Activated naive CD4-positive, alpha-beta T cell treated with anti-CD3 and anti-CD28 coated beads for 36 hours (primary cell): ENCODE measurements at regions of chr6 and their contacts with region 1.

Region 1: DNA sequence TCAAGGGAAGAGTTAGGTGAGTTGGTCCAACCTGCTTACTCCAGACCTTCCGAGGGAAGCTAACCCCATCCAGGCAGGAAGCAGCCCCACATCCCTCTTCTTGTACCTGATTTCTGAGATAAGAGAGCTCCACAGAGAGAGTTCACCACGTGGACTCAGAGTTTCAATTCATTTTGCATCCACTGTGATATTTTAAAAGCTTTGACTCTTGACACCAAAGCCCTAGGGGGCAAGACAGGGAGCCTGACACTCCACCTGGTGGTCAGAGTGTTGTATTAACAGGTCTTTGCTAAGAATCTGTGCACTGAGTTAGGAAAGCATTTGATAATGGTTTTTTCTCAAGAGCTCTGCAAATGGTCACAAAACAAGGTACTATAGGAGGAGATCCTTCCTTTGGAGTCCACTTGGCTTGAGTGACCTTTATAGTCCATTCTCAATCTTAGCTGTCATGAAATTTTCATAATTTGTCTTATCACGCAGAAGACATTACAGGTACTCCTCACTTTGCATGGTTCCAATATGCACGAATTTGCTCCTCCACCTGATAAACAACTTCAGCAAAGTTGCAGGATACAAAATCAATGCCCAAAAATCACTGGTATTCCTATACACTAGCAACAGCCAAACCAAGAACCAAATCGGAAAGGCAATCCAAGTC is 56.2 kb upstream of the RIPOR2 start:
- DNase-seq: peak; percentile 89
- H3K4me3 Mint-ChIP-seq: peak overlapping the region; percentile 37
- H3K27ac Mint-ChIP-seq: peak overlapping the region; percentile 86
- H3K4me1 Mint-ChIP-seq: peaks cover 68% of the 10 kb centered on the region
- H3K27me3 Mint-ChIP-seq: no peaks in the 10 kb centered on the region

Region 2: DNA sequence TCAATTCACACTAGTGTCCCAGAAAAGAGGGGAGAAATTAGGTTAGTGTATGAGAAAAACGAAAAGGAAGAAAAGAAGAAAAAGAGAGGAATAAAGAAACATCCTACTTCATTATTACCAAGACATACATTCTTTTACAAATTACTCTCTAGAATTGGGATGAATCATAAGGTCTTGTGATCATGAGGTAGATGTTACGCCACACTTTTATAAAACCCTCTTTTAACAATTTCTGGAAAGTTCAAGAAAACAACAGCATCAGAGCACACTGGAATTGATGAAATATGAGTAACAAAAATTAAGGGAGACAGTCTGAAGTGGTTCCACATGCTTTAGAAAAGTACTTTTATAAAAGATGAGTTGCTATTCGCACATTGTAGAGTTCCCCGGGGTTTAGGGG is 898.6 kb before region 1 on chr6:
- CTCF ChIA-PET with region 1: no interaction called
- intact Hi-C with region 1: no loop called
- DNase-seq: no peak
- H3K4me3 Mint-ChIP-seq: no peak overlapping the region
- H3K27ac Mint-ChIP-seq: no peak overlapping the region
- H3K4me1 Mint-ChIP-seq: no peaks in the 10 kb centered on the region
- H3K27me3 Mint-ChIP-seq: peaks cover 8% of the 10 kb centered on the region

Region 3: GRCh38 chr6:24228681-24229255 is 763.2 kb before region 1 on chr6:
- CTCF ChIA-PET with region 1: no interaction called
- intact Hi-C with region 1: no loop called
- DNase-seq: no peak
- H3K4me3 Mint-ChIP-seq: no peak overlapping the region
- H3K27ac Mint-ChIP-seq: no peak overlapping the region
- H3K4me1 Mint-ChIP-seq: no peaks in the 10 kb centered on the region
- H3K27me3 Mint-ChIP-seq: peaks cover 12% of the 10 kb centered on the region

Region 4: DNA sequence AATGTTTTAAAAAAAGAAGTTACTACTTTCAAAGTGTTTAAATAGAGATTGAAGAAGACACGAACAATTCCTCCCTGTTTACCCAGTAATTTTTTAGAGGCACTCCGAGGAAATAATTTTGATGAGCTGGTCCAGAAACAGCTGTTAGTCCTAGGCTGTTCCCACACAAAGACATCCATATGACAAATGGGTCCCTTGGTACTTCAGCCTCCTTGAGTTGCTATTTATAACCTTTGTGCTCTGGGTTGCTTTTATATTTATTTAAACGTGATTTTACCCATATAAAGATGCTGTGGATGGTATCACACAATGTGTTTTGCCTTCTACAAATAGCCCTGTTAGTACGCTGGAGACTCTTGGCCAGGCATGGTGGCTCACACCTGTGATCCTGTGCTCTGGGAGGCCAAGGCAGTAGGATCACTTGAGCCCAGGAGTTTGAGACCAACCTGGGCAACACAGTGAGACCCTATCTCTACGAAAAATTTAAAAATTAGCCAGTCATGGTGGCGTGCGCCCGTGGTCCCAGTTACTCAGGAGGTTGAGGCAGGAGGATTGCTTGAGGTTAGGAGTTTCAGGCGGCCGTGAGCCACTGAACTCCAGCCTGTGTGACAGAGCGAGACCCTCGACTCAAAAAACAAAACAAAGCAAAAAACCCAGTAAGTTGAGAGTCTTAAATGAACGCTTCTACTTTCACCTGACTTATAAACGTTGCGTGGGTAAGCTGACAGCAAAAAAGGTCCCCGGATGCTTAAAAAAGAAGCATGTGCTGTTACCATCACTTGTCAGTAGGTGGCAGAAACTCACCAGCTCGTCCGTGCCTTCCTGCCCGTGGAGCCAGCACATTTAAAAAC is 136.3 kb before region 1 on chr6:
- CTCF ChIA-PET with region 1: interaction called, 86 read pairs
- intact Hi-C with region 1: loop called (anchors 1 kb)
- DNase-seq: peak; percentile 85
- H3K4me3 Mint-ChIP-seq: peak overlapping the region; percentile 36
- H3K27ac Mint-ChIP-seq: peak overlapping the region; percentile 95
- H3K4me1 Mint-ChIP-seq: peaks cover 56% of the 10 kb centered on the region
- H3K27me3 Mint-ChIP-seq: no peaks in the 10 kb centered on the region

Region 5: DNA sequence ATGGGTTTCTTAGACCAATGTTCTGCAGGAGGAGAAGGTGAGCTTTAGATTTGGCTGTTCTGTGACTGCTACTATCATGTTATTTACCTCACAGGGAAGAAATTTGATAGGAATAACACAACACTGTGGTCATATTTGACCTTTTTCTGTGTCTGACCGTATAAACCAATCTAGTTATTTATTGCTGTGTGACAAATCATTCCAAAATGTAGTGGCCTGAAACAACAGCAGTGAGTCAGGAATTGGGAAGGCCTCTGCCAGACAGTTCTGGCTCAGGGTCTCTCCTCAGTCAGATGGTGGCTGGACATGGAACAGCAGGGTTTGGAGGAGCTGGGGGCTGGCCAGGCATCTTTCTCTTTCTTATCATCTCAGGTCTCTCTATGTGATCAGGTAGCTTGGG is 89.2 kb before region 1 on chr6:
- CTCF ChIA-PET with region 1: interaction called, 57 read pairs
- intact Hi-C with region 1: no loop called
- DNase-seq: no peak
- H3K4me3 Mint-ChIP-seq: no peak overlapping the region
- H3K27ac Mint-ChIP-seq: peak overlapping the region; percentile 84
- H3K4me1 Mint-ChIP-seq: peaks cover 90% of the 10 kb centered on the region
- H3K27me3 Mint-ChIP-seq: no peaks in the 10 kb centered on the region

Region 6: DNA sequence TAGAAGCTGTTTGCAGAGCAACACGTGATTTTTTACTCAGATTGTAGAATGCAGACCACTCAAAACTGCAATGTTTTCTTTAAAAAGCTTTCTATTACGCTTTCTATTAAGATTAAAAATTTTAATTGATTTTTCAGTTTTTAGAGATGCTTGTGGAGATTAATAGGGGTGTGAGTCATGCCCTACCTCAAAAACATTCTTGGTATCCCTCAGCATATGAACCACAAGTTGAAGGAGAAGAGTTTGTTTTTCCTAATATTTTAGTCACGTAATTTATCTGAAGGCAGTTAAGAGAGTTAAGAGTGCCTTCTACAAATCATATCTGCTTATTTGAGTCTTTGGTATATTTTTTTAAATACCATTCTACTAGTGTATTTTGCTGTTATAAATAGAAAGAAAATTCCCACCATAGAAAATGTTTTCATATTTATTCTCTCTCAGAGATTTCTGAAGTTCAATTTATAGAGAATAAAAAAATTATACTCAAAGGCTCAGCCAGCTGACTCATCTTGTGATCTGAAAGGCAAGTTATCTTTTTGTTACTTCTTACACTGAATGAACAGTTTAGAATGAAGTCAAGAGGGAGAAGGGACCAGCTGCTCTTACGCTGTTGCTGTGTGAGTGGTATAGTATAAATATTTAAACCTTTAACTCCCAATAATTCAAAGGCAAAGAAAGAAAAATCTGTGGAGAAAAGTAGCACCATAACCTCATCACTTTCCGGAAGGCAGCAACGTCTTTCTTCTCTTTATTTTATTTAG is 63.8 kb before region 1 on chr6:
- CTCF ChIA-PET with region 1: interaction called, 168 read pairs
- intact Hi-C with region 1: loop called (anchors 1 kb)
- DNase-seq: no peak
- H3K4me3 Mint-ChIP-seq: peak overlapping the region; percentile 90
- H3K27ac Mint-ChIP-seq: peak overlapping the region; percentile 96
- H3K4me1 Mint-ChIP-seq: peaks cover 77% of the 10 kb centered on the region
- H3K27me3 Mint-ChIP-seq: no peaks in the 10 kb centered on the region

Region 7: DNA sequence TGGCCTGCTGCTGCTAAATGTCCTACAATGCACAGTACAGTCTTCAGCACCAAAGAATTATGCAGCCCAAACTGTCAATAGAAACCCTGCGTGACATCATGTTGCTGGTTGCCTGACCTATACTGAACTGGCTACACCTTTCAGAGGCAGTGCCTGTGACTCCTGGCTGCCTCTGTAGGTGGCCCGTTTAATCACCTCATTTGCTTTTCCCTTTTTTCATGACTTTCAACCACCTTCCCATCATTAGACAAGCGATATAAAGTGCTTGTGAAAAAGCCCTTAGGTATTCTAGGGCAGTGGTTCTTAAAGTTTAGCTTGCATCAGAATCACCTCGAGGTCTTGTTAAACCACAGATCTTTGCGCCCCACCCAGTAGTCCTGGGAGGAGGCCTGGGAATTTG is 23.2 kb before region 1 on chr6:
- CTCF ChIA-PET with region 1: interaction called, 26 read pairs
- intact Hi-C with region 1: no loop called
- DNase-seq: no peak
- H3K4me3 Mint-ChIP-seq: no peak overlapping the region
- H3K27ac Mint-ChIP-seq: no peak overlapping the region
- H3K4me1 Mint-ChIP-seq: peaks cover 59% of the 10 kb centered on the region
- H3K27me3 Mint-ChIP-seq: no peaks in the 10 kb centered on the region

Region 8: GRCh38 chr6:25006565-25007001 is 14.6 kb after region 1 on chr6:
- CTCF ChIA-PET with region 1: interaction called, 54 read pairs
- intact Hi-C with region 1: no loop called
- DNase-seq: peak; percentile 72
- H3K4me3 Mint-ChIP-seq: peak overlapping the region; percentile 31
- H3K27ac Mint-ChIP-seq: peak overlapping the region; percentile 68
- H3K4me1 Mint-ChIP-seq: peaks cover 80% of the 10 kb centered on the region
- H3K27me3 Mint-ChIP-seq: no peaks in the 10 kb centered on the region

Region 9: DNA sequence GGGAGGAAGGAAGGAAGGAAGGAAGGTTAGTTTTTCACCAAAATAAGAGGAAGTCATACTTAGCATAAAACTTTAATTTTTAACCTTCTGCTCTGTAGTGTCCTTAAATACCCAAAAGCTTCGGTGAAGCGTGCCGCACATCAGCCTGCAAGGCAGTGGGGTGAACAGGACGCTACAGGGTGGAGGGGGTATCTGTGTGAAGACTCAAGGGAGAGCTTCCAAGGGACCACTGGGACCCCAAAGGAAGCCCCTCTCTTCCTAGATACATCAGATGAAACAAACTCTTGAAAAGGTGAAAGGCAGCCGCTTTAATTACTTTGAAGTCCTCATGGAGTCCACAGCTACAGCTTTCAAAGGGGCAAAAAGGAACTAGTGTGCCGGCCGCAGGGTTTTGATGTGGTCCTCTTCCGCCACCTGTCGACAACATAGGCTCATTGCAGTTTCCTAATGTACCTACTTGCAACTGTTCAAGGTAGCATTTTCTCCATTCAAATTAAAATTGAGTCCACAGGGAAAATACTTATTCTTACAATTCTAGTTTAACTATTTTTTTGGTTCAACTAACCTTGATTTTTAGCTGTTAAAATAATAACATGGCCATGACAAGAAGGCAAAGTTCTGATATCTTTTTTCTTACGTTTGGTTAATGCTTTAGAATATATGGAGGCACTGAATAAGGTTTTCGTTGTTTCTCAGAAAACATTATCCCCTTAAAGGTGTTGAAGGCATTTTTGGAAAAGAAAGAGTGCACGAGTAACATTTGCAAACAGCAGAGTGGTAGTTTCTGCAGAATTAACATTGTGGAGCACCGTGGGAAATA is 78.8 kb after region 1 on chr6:
- CTCF ChIA-PET with region 1: interaction called, 11 read pairs
- intact Hi-C with region 1: loop called (anchors 2 kb)
- DNase-seq: peak; percentile 91
- H3K4me3 Mint-ChIP-seq: peak overlapping the region; percentile 38
- H3K27ac Mint-ChIP-seq: peak overlapping the region; percentile 70
- H3K4me1 Mint-ChIP-seq: peaks cover 10% of the 10 kb centered on the region
- H3K27me3 Mint-ChIP-seq: no peaks in the 10 kb centered on the region

Region 10: DNA sequence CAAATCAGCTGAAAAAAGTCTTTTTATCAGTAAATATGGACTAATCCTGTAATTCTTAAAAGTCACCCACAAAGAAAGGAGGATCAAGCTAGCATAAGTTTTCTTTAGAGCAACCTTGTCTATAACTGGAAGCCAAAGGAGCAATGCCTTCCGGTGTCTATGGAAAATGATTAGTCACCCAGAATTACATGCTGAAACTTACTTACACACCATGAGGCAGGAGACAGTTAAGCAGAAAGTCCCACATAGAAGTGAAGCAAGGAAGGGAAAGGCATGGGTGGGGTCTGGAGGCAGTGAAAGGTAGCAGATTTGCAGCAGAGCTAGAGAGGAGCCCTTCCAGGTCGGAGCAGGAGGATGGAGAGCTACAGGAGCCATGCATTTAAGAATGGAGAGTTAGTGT is 97.5 kb after region 1 on chr6:
- CTCF ChIA-PET with region 1: no interaction called
- intact Hi-C with region 1: no loop called
- DNase-seq: no peak
- H3K4me3 Mint-ChIP-seq: no peak overlapping the region
- H3K27ac Mint-ChIP-seq: peak overlapping the region; percentile 8
- H3K4me1 Mint-ChIP-seq: peaks cover 8% of the 10 kb centered on the region
- H3K27me3 Mint-ChIP-seq: no peaks in the 10 kb centered on the region